Activated CD8-positive, alpha-beta memory T cell treated with anti-CD3 and anti-CD28 coated beads, Interleukin-2, amount 10 ng/mL, durations not matched to agents 7 days and 5 days (primary cell): ENCODE measurements at regions of chr10 and their contacts with region 1.

Region 1: GRCh38 chr10:98467506-98468346 is 21.0 kb upstream of the HPS1 start:
- DNase-seq: peak; percentile 74
- ATAC-seq: peak; percentile 97
- H3K4me3 Mint-ChIP-seq: peak overlapping the region; percentile 74
- H3K27ac Mint-ChIP-seq: peak overlapping the region; percentile 79
- H3K4me1 Mint-ChIP-seq: peaks cover 8% of the 10 kb centered on the region
- H3K27me3 Mint-ChIP-seq: peaks cover 12% of the 10 kb centered on the region

Region 2: DNA sequence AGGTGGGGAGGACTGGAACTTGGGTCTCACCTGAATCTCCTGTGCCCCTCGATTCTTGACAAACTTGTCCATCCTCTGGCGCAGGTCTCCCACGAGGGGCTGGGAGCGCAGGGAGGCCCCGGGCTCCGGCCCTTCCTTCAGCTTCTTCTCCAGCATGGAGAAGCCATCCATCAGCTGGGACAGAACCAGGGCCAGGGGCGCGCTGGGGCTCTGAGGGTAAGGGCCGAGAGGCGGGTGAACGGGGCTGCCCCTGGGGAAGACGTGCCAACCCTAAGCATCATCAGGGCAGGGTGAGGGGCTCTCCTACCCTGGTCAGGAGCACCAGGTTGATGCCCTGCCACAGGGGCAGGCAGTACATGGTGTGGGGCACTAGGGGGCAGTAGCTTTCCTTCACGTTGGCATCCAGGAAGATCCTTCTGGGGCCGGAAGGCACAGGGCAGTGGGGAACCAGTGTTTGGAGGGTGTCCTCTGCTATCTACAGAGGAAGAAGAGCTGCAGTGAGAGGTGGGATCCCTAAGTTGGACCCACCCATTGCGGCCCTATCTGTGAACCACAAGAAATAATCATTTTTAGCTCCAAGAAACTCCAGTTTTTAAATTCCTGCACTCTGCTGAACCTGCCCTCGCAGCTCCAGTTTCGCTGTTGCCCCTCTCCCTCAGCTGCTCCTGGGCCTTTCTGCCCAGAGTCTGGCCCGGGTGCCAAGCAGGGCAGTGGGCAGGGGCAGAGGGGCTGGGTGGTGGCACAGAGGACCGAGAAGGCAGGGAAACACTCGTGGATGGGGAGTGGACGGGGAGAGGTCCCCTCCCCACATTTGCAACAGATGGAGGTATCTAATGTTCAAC is 42.0 kb before region 1 on chr10:
- CTCF ChIA-PET with region 1: interaction called, 14 read pairs
- DNase-seq: peak; percentile 61
- ATAC-seq: peak; percentile 71
- H3K4me3 Mint-ChIP-seq: no peak overlapping the region
- H3K27ac Mint-ChIP-seq: no peak overlapping the region
- H3K4me1 Mint-ChIP-seq: no peaks in the 10 kb centered on the region
- H3K27me3 Mint-ChIP-seq: no peaks in the 10 kb centered on the region

Region 3: DNA sequence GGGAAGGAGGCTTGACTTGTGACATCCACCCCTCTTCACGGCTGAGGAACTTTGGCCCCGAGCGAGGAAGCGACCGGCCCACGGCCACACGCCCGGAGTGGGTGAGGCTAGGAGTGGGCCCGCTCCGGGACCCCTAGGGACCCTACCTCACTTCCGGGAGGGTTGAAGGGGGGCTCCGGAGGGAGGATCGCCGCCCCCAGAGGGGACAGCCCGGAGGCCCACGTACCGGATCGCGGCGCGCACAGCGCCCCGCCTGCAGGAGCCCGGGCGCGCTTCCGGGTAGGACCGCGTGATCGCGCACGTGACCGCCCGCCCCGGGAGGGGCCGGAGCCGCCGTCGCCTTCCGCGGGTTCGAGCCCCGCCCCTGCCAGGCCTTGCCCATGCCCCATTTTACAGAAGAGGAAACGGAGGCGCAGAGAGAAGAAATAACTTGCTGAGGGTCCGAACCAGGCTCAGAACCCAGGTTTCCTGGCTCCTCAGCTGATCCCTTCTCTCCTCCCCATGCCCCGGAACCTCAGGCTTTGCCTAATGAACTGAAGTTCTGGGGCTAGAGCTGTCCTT is 21.0 kb before region 1 on chr10 and contains the start of gene HPS1:
- CTCF ChIA-PET with region 1: interaction called, 13 read pairs
- DNase-seq: peak; percentile 87
- ATAC-seq: peak; percentile 95
- H3K4me3 Mint-ChIP-seq: peak within 1 kb of the TSS; percentile 91
- H3K27ac Mint-ChIP-seq: peak within 1 kb of the TSS; percentile 90
- H3K4me1 Mint-ChIP-seq: peaks cover 44% of the 10 kb centered on the region
- H3K27me3 Mint-ChIP-seq: peaks cover 13% of the 10 kb centered on the region
- total RNA-seq, gene HPS1: 72.0 to 99.5 TPM

Region 4: DNA sequence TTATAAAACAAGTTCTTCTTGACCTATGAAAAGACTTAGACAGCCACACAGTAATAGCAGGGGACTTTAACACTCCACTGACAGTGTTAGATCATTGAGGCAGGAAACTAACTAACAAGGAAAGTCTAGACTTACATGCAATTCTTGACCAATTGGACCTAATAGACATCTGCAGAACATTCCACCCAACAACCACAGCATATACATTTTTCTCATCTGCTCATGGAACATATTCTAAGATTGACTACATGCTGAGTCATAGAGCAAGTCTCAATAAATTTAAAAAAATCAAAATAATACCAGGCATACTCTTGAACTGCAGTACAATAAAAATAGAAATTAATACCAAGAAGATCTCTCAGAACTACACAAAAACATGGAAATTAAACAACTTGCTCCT is 198.6 kb after region 1 on chr10:
- CTCF ChIA-PET with region 1: interaction called, 19 read pairs
- DNase-seq: no peak
- ATAC-seq: no peak
- H3K4me3 Mint-ChIP-seq: no peak overlapping the region
- H3K27ac Mint-ChIP-seq: no peak overlapping the region
- H3K4me1 Mint-ChIP-seq: no peaks in the 10 kb centered on the region
- H3K27me3 Mint-ChIP-seq: peaks cover 33% of the 10 kb centered on the region

Region 5: GRCh38 chr10:99248824-99249223 is 781.1 kb after region 1 on chr10:
- CTCF ChIA-PET with region 1: interaction called, 12 read pairs
- DNase-seq: no peak
- ATAC-seq: no peak
- H3K4me3 Mint-ChIP-seq: no peak overlapping the region
- H3K27ac Mint-ChIP-seq: no peak overlapping the region
- H3K4me1 Mint-ChIP-seq: no peaks in the 10 kb centered on the region
- H3K27me3 Mint-ChIP-seq: peaks cover 8% of the 10 kb centered on the region